ENCODE measurements at regions of chr7 and their contacts with region 1.

Region 1: DNA sequence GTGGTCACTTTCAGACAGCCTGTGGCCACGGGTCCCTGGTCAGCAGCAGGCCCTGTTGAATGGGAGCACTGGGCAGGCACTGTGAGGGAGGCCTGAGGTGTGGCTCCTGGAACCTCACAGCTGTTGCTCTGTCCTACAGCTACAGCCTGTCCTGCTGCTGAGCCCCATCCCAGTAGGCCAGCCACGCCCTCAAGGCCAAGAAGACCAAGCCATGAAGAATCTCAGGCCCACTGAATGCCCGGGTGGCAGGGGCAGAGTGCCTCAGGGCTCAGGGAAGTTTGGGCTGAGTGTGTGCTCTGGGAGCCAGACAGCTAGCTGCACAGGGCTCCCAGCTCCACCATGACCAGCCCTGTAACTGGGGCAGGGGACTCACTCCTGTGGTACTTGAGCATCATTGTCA is 363.5 kb upstream of the NUPR2 start:
- DNase-seq: no peak
- ATAC-seq: no peak
- H3K4me3 ChIP-seq: no peak overlapping the region
- H3K27ac ChIP-seq: no peak overlapping the region
- H3K4me1 ChIP-seq: no peaks in the 10 kb centered on the region
- H3K27me3 ChIP-seq: no peaks in the 10 kb centered on the region
- CTCF ChIP-seq: no peak
- POLR2A ChIP-seq: no peak

Region 2: DNA sequence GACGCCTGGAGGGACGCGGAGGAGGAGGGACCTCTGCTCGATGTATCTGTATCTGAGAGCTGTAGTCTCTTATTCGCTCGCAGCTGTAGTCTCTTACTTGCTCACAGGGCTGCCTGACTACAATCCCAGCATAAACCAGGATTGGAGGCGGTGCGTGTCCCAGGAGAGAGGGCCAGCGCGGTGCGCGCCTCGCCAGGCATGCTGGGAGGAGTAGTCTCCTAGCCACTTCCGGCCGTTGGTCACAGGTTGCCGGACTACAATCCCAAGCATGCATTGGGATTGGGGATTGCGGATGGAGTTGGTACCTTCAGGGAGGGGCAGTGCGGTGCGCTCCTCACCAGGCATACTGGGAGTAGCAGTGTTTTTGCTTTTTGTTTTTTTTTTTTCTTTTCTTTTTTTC is 58.2 kb after region 1 on chr7:
- intact Hi-C with region 1: loop called in 1 of 2 experiments (anchors 10 kb)
- DNase-seq: peak in 1 of 3 donors; percentile 58
- ATAC-seq: peak; percentile 41 to 78 (median 71)
- H3K4me3 ChIP-seq: peak overlapping the region in 1 of 3 donors; percentile 27
- H3K27ac ChIP-seq: no peak overlapping the region
- H3K4me1 ChIP-seq: no peaks in the 10 kb centered on the region
- H3K27me3 ChIP-seq: no peaks in the 10 kb centered on the region
- CTCF ChIP-seq: no peak
- POLR2A ChIP-seq: no peak

Measured in right lobe of liver (tissue), 6 donors.